ENCODE measurements at regions of chr7 and their contacts with region 1.

Region 1: DNA sequence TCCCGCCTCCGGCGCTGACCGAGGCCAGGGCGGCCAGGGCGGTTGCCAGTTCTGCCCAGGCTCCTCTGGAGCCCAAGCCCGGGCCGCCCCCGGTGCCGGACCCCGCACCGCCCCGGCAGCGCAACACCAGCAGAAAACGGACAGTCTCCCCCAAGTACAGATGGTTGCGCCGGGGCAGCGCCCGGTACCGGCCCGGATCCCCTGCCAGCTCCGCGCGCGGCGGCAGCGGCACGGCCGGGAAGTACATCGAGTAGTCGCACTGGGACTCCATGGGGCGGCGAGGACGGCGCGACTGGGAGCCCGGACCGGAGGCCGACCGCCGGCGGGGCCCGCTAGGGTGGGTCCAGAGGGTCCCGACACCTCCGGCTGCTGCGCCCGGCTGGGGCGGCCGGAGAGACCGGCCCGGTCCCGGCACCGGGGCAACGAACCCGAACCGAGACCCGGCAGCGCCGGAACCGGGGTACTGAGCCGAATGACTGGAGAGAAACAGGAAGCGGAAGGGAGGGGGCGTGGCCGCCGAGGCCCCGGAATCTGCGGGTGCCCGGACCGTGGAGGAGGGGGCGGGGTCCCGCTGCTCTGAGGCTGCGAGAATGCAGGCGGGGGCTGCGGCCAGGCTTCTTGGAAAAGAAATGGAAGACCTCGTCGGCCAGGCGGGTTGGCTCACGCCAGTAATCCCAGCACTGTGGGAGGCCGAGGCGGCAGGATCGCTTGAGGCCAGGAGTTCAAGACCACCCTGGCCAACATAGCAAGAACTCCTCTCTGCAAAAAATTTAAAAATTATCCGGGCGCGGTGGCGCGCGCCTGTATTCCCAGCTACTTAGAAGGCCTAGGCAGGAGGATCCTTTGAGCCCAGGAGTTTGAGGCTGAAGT is at the start of gene TRAPPC14:
- DNase-seq: peak; percentile 83
- H3K4me3 ChIP-seq: peak within 1 kb of the TSS; percentile 56 to 86 (median 66)
- H3K27ac ChIP-seq: peak within 1 kb of the TSS; percentile 32
- H3K4me1 ChIP-seq: peaks cover 14% of the 10 kb centered on the region
- H3K27me3 ChIP-seq: no peaks in the 10 kb centered on the region
- CTCF ChIP-seq: no peak
- POLR2A ChIP-seq: peak; percentile 77
- total RNA-seq, gene TRAPPC14: 23.0 and 24.0 TPM in 2 replicates

Region 2: DNA sequence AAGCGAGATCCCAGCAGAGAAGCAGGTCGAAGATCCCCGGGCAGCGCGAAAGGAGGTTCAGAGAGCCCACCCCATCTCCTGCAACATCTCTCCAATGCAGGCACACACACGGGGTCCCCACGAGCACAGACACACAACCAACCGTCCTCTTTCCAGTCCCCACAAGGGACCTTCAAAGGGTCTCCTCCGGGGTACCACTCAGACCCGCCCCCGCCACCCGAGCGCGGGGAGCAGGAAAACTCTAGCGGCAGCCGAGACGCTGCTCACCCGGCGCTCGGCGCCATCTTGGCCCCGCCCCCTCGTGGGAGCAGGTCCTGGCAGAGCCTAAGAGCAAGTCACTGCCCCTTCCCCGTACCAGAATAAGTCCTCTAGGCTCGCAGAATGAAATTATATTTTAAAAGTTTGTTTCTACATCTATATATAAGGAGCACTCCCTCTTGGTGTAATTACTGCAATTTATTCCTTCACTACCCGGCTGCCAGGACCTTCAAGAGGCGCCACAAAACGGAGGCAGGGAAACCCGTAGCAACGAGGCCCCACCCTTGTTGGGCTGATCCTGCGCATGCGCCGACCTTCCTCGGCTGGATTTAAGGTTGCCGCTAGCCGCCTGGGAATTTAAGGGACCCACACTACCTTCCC is 39.3 kb before region 1 on chr7 and contains the starts of genes CNPY4 and TAF6:
- CTCF ChIA-PET with region 1: no interaction called
- POLR2A ChIA-PET with region 1: no interaction called
- dilution Hi-C with region 1: no loop called
- intact Hi-C with region 1: no loop called
- DNase-seq: peak; percentile 96
- H3K4me3 ChIP-seq: peak within 1 kb of the TSS; percentile 70 to 89 (median 77)
- H3K27ac ChIP-seq: peak within 1 kb of the TSS; percentile 83
- H3K4me1 ChIP-seq: peaks cover 11% of the 10 kb centered on the region
- H3K27me3 ChIP-seq: no peaks in the 10 kb centered on the region
- CTCF ChIP-seq: no peak
- POLR2A ChIP-seq: peak; percentile 86
- total RNA-seq, gene CNPY4: 18.0 and 33.7 TPM in 2 replicates
- total RNA-seq, gene TAF6: 64.6 and 67.3 TPM in 2 replicates

Region 3: DNA sequence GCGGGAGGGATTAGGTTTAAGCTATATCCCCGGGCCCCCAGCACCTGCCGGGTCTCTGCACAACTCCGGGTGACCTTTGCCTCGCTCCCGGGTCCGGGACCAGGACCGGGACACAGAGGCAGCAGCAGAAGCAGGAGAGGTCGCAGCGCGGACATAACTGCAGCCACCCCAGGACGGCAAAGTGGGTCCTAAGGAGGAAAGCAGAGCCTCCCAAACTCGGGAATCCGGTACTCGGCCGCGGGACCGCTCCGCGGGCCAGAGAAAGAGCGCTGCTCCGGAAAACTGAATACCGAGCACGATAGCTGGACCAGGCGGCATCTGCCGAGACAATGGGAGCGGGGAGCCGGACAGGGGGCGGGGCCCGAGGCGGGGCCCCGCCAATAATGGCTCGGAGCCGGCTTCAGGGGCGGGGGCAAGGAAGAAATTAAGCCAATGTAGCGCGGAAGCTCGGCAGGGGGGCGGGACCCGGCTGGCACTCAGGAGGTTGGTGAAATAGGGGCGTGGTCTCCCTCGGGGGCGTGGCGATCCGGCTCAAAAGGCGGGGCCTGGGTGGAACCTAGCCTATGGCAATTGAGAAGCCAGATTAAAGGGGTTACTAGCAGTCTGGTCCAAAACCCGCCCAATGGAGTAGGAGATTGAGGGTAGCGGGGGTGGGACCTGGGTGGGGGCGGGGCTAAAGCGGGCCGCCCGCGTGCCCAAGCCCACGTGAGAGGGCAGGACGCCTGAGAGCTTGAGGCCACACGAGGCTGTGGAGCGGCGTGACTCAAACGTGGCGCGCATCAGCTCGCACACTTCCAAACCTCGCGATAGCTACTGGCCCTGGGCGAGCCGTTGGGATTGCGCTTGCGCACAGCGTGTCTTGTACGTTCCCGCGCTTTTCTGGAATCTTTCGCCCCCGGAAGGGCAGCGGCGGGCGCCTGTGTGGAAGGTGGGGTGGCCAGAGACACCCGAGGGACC is 18.9 kb after region 1 on chr7 and contains the starts of genes GPC2 and STAG3:
- CTCF ChIA-PET with region 1: interaction called, 3 read pairs
- POLR2A ChIA-PET with region 1: interaction called, 3 read pairs
- dilution Hi-C with region 1: no loop called
- intact Hi-C with region 1: loop called (anchors 1 kb)
- DNase-seq: peak; percentile 99
- H3K4me3 ChIP-seq: peak within 1 kb of the TSS; percentile 76 to 99 (median 91)
- H3K27ac ChIP-seq: peak within 1 kb of the TSS; percentile 47
- H3K4me1 ChIP-seq: peaks cover 5% of the 10 kb centered on the region
- H3K27me3 ChIP-seq: peaks cover 2 to 5% of the 10 kb centered on the region in 2 experiments
- CTCF ChIP-seq: no peak
- POLR2A ChIP-seq: peak; percentile 85
- total RNA-seq, gene GPC2: 17.5 and 20.9 TPM in 2 replicates
- total RNA-seq, gene STAG3: 0.55 and 1.4 TPM in 2 replicates

Measured in endothelial cell of umbilical vein (primary cell).